GM23248 (cell line): ENCODE measurements at regions of chr9 and their contacts with region 1.

Region 1: DNA sequence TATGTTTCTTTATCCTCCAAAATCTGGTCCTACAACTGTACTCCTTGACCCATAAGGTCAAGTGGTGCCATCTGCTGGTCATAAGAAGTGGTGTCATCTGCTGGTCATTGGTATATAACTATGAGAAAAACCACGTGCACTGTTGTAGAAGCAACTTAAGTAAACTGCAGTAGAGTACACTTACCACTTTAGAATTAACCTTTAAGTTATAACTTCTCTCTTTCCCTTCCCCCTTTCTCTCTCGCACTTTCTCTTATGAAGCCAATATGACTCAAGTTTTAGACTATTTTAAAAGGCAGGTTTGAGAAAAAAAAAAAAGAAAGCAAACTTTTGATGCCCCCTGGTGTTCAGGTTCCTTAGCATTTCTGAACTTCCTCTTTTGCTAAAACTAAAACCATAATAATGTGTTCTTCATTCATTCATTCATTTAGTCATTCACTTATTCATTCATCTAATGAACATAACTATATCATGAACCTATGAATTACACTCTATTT is 12.8 kb upstream of the MTAP start:
- DNase-seq: peak; percentile 93
- H3K4me3 ChIP-seq: peak overlapping the region; percentile 69
- H3K27ac ChIP-seq: peak overlapping the region; percentile 21
- H3K4me1 ChIP-seq: peaks cover 14% of the 10 kb centered on the region
- H3K27me3 ChIP-seq: no peaks in the 10 kb centered on the region

Region 2: GRCh38 chr9:21244836-21245235 is 544.8 kb before region 1 on chr9:
- in situ Hi-C with region 1: loop called (anchors 25 kb)
- DNase-seq: no peak
- H3K4me3 ChIP-seq: no peak overlapping the region
- H3K27ac ChIP-seq: no peak overlapping the region
- H3K4me1 ChIP-seq: no peaks in the 10 kb centered on the region
- H3K27me3 ChIP-seq: peaks cover 68% of the 10 kb centered on the region

Region 3: DNA sequence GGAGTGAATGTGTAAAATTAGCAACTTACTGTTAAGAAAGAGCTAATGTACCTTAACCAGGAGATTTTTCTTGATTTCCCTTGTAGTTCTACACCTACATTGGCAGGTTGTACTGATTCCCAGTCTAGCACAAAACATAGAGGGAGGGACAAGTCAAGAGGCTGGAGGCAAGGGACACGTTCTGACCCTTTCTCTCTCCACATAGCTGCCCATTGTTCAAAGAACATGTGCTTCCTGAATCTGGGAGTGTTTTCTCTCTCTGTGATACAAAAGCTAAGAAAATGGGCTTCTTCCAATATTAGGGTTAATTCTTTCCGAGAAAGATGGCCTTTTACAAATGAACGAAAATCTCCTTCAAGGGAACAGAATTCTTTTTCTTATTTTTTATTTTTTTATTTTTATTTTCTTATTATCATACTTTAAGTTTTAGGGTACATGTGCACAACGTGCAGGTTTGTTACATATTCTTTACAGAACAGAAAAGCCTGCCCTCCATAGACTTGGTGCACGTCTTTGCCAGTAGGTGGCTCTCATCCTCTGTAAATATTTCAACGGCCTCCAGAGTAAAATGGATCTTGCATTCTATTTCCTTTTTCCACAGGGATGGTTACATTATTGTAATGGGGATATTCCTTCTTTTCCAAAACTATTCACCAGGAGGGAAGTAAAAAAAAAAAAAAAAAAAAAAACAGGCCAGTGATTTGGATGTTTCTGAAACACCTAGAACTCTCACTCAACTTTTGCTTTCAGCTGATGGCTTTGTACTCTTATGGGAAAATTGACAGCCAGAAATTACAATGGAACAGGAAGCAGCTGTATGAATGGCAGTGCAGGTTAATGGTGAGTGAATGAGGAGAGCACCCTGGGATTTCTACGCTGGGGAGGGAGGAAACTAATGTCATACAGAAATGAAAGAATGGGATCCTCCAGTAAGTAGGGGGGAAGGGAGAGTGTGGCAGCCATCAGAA is 471.3 kb before region 1 on chr9:
- in situ Hi-C with region 1: loop called (anchors 10 kb)
- DNase-seq: peak; percentile 78
- H3K4me3 ChIP-seq: no peak overlapping the region
- H3K27ac ChIP-seq: no peak overlapping the region
- H3K4me1 ChIP-seq: no peaks in the 10 kb centered on the region
- H3K27me3 ChIP-seq: no peaks in the 10 kb centered on the region

Region 4: DNA sequence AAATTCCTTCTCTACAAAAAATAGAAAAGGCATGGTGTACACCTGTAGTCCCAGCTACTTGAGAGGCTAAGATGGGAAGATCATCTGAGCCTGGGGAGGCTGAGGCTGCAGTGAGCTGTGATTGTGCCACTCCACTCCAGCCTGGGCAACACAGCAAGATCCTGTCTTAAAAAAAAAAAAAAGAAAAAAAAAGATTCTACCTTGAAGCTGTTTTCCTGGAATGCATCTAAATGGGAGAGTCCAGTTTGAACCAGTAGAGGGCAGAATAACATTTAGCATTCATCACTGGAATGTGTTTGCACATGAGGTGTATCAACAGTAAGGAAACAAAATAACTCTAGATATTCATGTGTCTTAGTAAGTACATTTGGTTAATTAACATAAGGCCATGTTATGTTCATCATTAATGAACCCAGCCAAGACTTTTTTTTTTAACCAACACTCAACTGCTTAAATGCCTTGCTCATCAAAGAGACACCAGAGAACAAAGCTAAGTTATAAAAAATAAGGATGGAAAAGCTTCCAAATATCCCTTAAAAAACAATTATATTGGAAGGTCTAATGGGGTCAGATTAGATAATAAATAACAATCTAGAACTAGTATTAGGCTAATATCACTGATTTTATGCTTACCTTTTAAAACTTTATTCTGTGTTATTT is 323.6 kb before region 1 on chr9:
- in situ Hi-C with region 1: loop called (anchors 10 kb)
- DNase-seq: peak; percentile 68
- H3K4me3 ChIP-seq: no peak overlapping the region
- H3K27ac ChIP-seq: peak overlapping the region; percentile 6; the same call in 1 of the 2 replicates
- H3K4me1 ChIP-seq: 0 out of 2 replicates have a peak, but pooled peaks cover 6% of the 10 kb centered on the region
- H3K27me3 ChIP-seq: no peaks in the 10 kb centered on the region